Right ventricle myocardium inferior (tissue), 1 donor: ENCODE measurements at regions of chr19 and their contacts with region 1.

Region 1: DNA sequence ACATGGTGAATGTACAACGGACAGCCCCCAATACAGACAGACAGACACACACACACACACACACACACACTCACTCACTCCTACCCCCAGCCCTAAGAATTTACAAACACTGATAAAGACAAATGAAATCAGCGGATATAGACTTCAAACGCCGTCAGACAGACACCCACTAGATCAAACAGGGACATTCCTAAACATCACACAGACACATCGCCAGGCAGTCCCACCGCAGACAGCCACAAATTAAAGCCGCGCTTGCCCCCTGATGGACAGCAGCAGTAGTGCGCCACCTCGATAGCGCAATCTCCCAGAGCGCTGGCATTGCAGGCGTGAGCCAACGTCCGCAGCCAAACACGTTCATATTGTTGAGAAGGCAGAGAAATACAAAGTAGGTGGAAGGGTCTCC is 24.7 kb upstream of the ADGRE1 start:
- DNase-seq: peak; percentile 89
- ATAC-seq: peak; percentile 93

Region 2: DNA sequence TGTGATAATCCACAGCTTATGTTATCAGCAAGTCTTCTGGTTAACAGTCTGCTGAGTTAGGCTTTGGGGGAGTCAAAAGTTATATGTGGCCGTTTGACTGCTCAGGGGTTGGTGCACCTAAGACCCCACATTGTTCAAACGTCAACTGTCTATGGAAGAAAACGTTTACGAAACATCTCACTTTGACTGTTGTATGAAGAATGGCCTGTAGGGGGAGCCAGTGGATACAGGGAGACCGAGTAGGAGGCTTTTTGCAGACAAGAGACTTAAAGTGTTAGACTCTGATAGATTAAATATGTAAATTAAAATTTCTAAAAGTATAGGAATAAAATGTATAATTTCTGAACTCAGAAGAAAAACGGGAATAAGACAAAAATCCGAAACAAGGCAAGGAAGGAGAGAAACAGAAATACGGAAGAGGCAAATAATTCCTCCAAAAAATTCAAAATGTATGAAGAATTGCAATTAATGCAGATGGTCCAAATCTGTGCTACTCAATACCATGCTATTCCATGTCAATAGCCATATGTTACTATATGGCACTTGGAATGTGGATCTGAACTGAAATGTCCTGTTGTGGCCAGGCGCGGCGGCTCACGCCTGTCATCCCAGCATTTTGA is 230.6 kb before region 1 on chr19:
- intact Hi-C with region 1: loop called (anchors 2 kb)
- DNase-seq: no peak
- ATAC-seq: peak; percentile 59

Region 3: DNA sequence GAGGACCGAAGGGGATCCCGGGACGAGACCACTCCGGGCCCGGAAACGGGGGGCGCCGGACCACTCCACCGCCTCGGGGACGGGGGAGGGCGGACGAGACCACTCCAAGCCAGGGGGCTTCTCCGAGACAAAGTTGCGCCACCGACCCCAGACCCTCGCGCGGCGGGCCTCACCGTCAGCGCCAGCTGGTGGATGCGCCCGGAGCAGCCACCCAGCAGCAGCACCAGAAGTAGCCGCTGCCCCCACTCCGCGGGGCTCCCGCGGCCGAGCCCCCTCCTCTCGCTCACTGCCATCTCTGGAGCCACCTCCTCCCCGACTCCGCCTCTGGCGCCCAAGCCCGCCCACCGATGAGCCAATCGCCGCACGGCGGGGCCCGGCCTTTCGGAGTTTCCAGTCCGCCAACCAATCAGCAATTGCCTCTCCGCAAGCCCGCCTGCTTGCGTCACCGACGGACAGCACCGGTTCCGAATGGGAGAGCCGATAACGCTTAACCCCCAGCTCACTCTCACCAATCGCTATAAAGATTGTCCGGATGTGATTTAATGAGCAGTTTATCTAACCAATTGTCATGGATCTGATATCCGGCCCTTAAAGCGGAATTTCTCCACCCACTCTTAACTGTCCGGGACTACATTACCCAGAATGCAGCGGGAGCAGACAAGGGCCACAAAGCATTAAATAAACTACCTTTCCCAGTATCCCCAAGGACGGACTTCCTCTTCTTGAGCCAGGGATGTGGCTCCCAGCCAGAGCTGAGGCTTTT is 125.2 kb before region 1 on chr19 and contains the start of gene GPR108:
- intact Hi-C with region 1: loop called (anchors 2 kb)
- DNase-seq: peak; percentile 100
- ATAC-seq: peak; percentile 83
- total RNA-seq, gene GPR108: 23.9 TPM

Region 4: GRCh38 chr19:6849876-6850275 is 12.8 kb before region 1 on chr19:
- intact Hi-C with region 1: no loop called
- DNase-seq: no peak
- ATAC-seq: no peak

Region 5: GRCh38 chr19:6916952-6917351 is 54.3 kb after region 1 on chr19:
- intact Hi-C with region 1: no loop called
- DNase-seq: no peak
- ATAC-seq: no peak